WTC11 (cell line): ENCODE measurements at regions of chr10 and their contacts with region 1.

Region 1: GRCh38 chr10:70146489-70147258 is at the start of gene TYSND1:
- DNase-seq: peak; percentile 98
- ATAC-seq: peak; percentile 93
- H3K4me3 Mint-ChIP-seq: peak within 1 kb of the TSS; percentile 78
- H3K27ac Mint-ChIP-seq: peak within 1 kb of the TSS; percentile 96
- H3K4me1 Mint-ChIP-seq: peaks cover 16% of the 10 kb centered on the region
- H3K27me3 Mint-ChIP-seq: no peaks in the 10 kb centered on the region
- CTCF ChIP-seq: peak; percentile 17; the same call in 1 of the 2 replicates
- total RNA-seq, gene TYSND1: 18.9 to 21.3 TPM (median 20.7 TPM) in 3 replicates

Region 2: GRCh38 chr10:69929575-69929974 is 217.1 kb before region 1 on chr10:
- CTCF ChIA-PET with region 1: no interaction called
- POLR2A ChIA-PET with region 1: no interaction called
- DNase-seq: peak; percentile 27
- ATAC-seq: peak; percentile 67
- H3K4me3 Mint-ChIP-seq: no peak overlapping the region
- H3K27ac Mint-ChIP-seq: no peak overlapping the region
- H3K4me1 Mint-ChIP-seq: peaks cover 14% of the 10 kb centered on the region
- H3K27me3 Mint-ChIP-seq: no peaks in the 10 kb centered on the region; the same call in 1 of the 2 replicates
- CTCF ChIP-seq: no peak

Region 3: GRCh38 chr10:70052462-70053217 is 94.0 kb before region 1 on chr10 and contains the start of gene MACROH2A2:
- CTCF ChIA-PET with region 1: interaction called, 12 read pairs
- POLR2A ChIA-PET with region 1: interaction called, 3 read pairs
- DNase-seq: peak; percentile 77
- ATAC-seq: peak; percentile 91
- H3K4me3 Mint-ChIP-seq: peak within 1 kb of the TSS; percentile 77
- H3K27ac Mint-ChIP-seq: no peak within 1 kb of the TSS
- H3K4me1 Mint-ChIP-seq: peaks cover 29% of the 10 kb centered on the region
- H3K27me3 Mint-ChIP-seq: peaks cover 79% of the 10 kb centered on the region
- CTCF ChIP-seq: no peak
- total RNA-seq, gene MACROH2A2: 33.0 to 35.4 TPM (median 33.5 TPM) in 3 replicates

Region 4: GRCh38 chr10:70115948-70116682 is 30.6 kb before region 1 on chr10:
- CTCF ChIA-PET with region 1: interaction called, 79 read pairs
- POLR2A ChIA-PET with region 1: interaction called, 8 read pairs
- DNase-seq: peak; percentile 77
- ATAC-seq: peak; percentile 85
- H3K4me3 Mint-ChIP-seq: no peak overlapping the region
- H3K27ac Mint-ChIP-seq: 0 out of 2 replicates have a peak overlapping the region, but pooled peaks have one; percentile 30
- H3K4me1 Mint-ChIP-seq: peaks cover 10% of the 10 kb centered on the region; the same call in 1 of the 2 replicates
- H3K27me3 Mint-ChIP-seq: no peaks in the 10 kb centered on the region
- CTCF ChIP-seq: peak; percentile 92

Region 5: GRCh38 chr10:70158113-70158512 is 11.4 kb after region 1 on chr10:
- CTCF ChIA-PET with region 1: interaction called, 11 read pairs
- POLR2A ChIA-PET with region 1: interaction called, 4 read pairs
- DNase-seq: no peak
- ATAC-seq: no peak
- H3K4me3 Mint-ChIP-seq: no peak overlapping the region
- H3K27ac Mint-ChIP-seq: no peak overlapping the region
- H3K4me1 Mint-ChIP-seq: peaks cover 23% of the 10 kb centered on the region
- H3K27me3 Mint-ChIP-seq: no peaks in the 10 kb centered on the region
- CTCF ChIP-seq: no peak

Region 6: DNA sequence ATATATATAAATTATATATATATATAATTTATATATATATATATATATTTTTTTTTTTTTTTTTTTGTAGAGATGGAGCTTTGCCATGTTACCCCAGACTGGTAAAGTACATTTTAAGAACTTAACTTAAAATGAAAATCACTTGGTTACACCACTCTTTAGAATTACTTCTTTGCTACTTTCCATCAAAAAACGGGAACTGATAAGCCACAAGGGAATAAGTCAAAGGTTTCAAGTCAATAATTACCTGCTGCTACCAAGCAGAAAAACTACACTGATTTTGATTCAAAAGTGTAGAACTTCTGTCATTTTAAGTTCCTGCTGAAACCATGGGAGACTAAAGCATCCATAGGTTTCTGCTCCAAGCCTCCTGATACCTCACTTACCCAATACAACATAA is 74.4 kb after region 1 on chr10:
- CTCF ChIA-PET with region 1: interaction called, 17 read pairs
- POLR2A ChIA-PET with region 1: no interaction called
- DNase-seq: no peak
- ATAC-seq: no peak
- H3K4me3 Mint-ChIP-seq: no peak overlapping the region
- H3K27ac Mint-ChIP-seq: no peak overlapping the region
- H3K4me1 Mint-ChIP-seq: peaks cover 3% of the 10 kb centered on the region
- H3K27me3 Mint-ChIP-seq: no peaks in the 10 kb centered on the region
- CTCF ChIP-seq: no peak